Activated CD4-positive, alpha-beta T cell treated with anti-CD3 and anti-CD28 coated beads, Interleukin-2, amount 10 ng/mL, durations not matched to agents 24 days and 14 days (primary cell): ENCODE measurements at regions of chr2 and their contacts with region 1.

Region 1: DNA sequence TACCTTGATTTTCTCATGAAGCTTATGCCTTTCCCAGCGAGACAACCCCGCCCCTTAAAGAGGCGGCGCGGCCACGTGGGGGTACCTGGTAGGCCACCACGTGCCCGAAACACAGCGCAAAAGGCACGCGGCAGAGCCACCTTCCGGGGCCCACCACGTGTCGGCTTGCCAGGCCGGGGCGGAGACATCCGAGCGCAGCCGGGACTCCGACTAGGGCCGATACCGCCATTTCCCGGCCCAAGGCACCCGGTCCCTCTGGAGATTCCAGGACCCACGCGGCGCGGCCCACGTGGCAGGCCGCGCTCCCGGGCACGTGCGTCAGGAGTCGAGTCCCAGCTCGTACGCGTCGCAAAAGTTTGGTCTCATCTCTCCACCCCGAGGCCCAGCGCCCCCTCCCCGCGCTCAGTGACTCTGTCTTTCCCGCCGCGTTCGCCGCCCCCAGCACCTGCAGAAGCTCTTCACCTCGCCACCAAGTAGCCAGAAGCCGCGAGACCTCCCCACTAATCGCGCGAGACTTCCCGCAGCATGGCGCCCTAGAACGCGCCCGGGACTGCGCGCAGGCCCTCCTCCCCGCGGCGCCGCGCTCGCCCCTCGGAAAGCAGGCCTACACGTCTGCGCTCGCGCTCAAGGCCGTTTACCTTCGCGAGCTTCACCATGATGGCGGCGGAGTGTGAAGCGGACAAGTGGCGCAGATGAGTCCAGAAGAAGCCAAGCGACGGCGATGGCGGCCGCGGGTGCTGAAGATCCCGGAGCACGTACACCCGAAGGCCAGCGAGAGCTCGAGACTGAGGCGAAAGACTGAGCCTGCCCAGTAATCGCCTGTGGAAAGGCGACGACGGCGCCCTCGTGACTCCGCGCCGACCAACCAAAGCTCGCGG is at the start of gene NCL:
- DNase-seq: peak; percentile 95
- H3K4me3 Mint-ChIP-seq: peak within 1 kb of the TSS; percentile 93
- H3K27ac Mint-ChIP-seq: peak within 1 kb of the TSS; percentile 100
- H3K4me1 Mint-ChIP-seq: peaks cover 34% of the 10 kb centered on the region
- H3K27me3 Mint-ChIP-seq: no peaks in the 10 kb centered on the region
- total RNA-seq, gene NCL: 1,513 and 1,560 TPM in 2 replicates

Region 2: GRCh38 chr2:231056453-231057424 is 407.2 kb before region 1 on chr2 and contains the start of gene PSMD1:
- intact Hi-C with region 1: loop called (anchors 5 kb)
- DNase-seq: peak; percentile 98
- H3K4me3 Mint-ChIP-seq: peak within 1 kb of the TSS; percentile 95
- H3K27ac Mint-ChIP-seq: peak within 1 kb of the TSS; percentile 100
- H3K4me1 Mint-ChIP-seq: peaks cover 56% of the 10 kb centered on the region
- H3K27me3 Mint-ChIP-seq: peaks cover 10% of the 10 kb centered on the region
- total RNA-seq, gene PSMD1: 200 and 203 TPM in 2 replicates

Region 3: GRCh38 chr2:231260442-231261208 is 203.3 kb before region 1 on chr2:
- intact Hi-C with region 1: no loop called
- DNase-seq: no peak
- H3K4me3 Mint-ChIP-seq: no peak overlapping the region
- H3K27ac Mint-ChIP-seq: no peak overlapping the region
- H3K4me1 Mint-ChIP-seq: peaks cover 10% of the 10 kb centered on the region
- H3K27me3 Mint-ChIP-seq: peaks cover 17% of the 10 kb centered on the region

Region 4: DNA sequence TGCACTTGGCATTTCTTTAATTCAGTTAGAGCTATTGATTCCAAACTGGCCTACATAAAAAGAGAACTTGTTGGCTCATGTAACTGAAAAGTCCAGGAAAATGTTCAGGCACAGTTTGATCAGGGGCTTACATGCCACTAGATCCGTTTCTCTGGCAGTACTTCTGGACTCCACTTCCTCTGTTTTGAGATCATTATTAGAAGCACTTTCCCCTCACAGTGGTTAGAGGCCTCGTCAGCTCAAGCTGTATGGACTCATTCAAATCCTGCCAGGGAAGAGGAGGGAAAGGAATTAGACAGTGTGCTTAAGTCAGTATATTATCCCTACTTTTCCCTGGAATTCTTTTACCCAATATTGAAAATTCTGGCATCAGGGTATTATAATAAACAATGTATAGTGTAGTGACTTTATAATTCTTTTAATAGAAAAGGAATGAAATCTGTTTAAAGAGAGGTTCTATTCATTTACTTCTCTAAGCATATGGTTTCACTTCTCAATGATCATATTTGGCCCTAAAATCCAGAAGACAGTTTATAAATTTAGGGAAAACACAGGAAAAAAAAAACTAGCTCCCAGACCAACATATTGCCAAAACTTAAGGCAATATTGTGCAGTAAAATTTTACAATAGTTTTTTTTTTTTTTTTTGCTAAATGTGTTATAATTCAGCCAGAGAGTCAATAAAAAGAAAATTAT is 173.5 kb before region 1 on chr2:
- intact Hi-C with region 1: no loop called
- DNase-seq: no peak
- H3K4me3 Mint-ChIP-seq: no peak overlapping the region
- H3K27ac Mint-ChIP-seq: no peak overlapping the region
- H3K4me1 Mint-ChIP-seq: no peaks in the 10 kb centered on the region
- H3K27me3 Mint-ChIP-seq: peaks cover 3% of the 10 kb centered on the region

Region 5: DNA sequence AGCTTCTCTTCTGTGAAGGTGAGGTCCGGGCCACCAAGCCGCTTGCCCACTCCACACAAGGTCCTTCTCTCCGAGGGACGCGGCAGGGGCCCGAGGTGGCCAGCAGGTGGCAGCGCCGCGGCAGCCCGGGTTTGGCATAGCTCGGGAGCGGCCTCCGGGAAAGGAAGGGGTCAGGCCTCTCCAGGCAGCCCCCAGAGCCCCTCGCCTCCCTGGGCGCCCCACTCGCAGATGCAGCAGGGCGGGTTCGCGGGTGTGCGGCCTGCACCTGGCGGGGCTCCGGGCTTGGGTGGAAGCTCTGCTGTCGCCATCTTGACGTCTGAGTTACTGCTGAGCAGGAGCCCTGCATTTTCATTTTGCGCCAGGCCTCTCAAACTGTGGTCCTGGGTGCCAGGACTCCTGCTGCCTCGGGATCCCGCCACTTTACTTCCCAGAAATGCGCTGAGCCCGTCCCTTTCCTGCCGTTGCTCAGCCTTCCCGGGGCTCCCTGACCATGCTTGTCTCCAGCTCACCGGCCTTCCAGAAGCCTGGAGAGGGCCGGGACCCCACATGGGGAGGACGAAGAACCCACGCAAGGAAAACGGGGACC is 19.0 kb after region 1 on chr2:
- intact Hi-C with region 1: loop called (anchors 1 kb)
- DNase-seq: peak; percentile 93
- H3K4me3 Mint-ChIP-seq: peak overlapping the region; percentile 84
- H3K27ac Mint-ChIP-seq: peak overlapping the region; percentile 94
- H3K4me1 Mint-ChIP-seq: peaks cover 10% of the 10 kb centered on the region
- H3K27me3 Mint-ChIP-seq: peaks cover 3% of the 10 kb centered on the region

Region 6: GRCh38 chr2:231604685-231605606 is 141.0 kb after region 1 on chr2:
- intact Hi-C with region 1: loop called (anchors 2 kb)
- DNase-seq: peak; percentile 99
- H3K4me3 Mint-ChIP-seq: peak overlapping the region; percentile 67
- H3K27ac Mint-ChIP-seq: peak overlapping the region; percentile 78
- H3K4me1 Mint-ChIP-seq: peaks cover 10% of the 10 kb centered on the region
- H3K27me3 Mint-ChIP-seq: peaks cover 7% of the 10 kb centered on the region

Region 7: DNA sequence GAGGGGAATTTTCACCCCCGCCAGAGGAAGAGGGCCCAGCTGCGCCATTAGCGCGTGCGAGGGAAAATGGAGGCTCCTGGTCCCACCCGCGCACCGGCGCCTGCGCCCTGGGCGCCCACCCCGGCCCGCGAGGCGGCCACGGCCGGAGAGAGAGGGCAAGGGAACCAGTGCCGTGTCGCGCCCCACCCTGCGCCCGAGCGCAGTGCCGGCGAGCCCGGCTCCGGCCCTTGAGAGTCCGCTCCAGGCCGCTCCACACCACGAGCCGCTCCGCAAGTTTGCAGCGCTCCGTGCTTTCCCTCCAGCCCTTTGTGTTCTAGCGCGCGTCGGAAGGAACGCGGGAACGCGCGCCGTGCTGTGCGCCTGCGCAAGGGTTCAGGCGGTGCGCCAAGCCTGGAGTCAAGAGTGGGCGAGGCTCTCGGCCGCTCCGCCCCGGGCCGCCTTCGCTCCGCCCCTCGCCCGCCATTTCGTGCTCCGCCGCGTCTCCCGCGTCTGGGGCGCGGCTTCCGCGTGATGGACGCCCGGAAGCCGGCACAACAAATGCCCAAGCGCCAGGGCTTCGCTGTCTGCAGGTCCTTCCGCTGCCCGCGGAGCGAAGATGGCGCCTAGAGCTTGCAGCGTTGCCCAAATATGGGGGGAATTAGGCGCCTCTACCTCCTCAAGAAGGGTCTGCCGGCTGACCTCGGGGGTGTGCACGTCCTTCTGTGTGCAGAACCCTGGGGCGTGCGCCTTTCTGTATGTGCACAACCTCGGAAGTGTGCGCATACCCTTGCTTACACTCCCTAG is 198.3 kb after region 1 on chr2:
- intact Hi-C with region 1: loop called (anchors 1 kb)
- DNase-seq: peak; percentile 100
- H3K4me3 Mint-ChIP-seq: peak overlapping the region; percentile 70
- H3K27ac Mint-ChIP-seq: peak overlapping the region; percentile 98
- H3K4me1 Mint-ChIP-seq: peaks cover 22% of the 10 kb centered on the region
- H3K27me3 Mint-ChIP-seq: no peaks in the 10 kb centered on the region